ENCODE measurements at regions of chr14 and their contacts with region 1.

Region 1: GRCh38 chr14:88005978-88006851 is 1.3 kb downstream of the GPR65 start:
- DNase-seq: peak; percentile 87
- ATAC-seq: peak; percentile 93
- H3K4me3 Mint-ChIP-seq: peak overlapping the region; percentile 95
- H3K27ac Mint-ChIP-seq: peak overlapping the region; percentile 97
- H3K4me1 Mint-ChIP-seq: peaks cover 64% of the 10 kb centered on the region
- H3K27me3 Mint-ChIP-seq: no peaks in the 10 kb centered on the region

Region 2: GRCh38 chr14:87992718-87993628 is 13.2 kb before region 1 on chr14 and contains the start of gene GALC:
- CTCF ChIA-PET with region 1: interaction called, 47 read pairs
- DNase-seq: peak; percentile 98
- ATAC-seq: peak; percentile 90
- H3K4me3 Mint-ChIP-seq: peak within 1 kb of the TSS; percentile 93
- H3K27ac Mint-ChIP-seq: peak within 1 kb of the TSS; percentile 96
- H3K4me1 Mint-ChIP-seq: peaks cover 53% of the 10 kb centered on the region
- H3K27me3 Mint-ChIP-seq: no peaks in the 10 kb centered on the region
- total RNA-seq, gene GALC: 20.6 to 25.7 TPM

Region 3: GRCh38 chr14:88037270-88037669 is 31.1 kb after region 1 on chr14:
- CTCF ChIA-PET with region 1: no interaction called
- DNase-seq: no peak
- ATAC-seq: no peak
- H3K4me3 Mint-ChIP-seq: no peak overlapping the region
- H3K27ac Mint-ChIP-seq: no peak overlapping the region
- H3K4me1 Mint-ChIP-seq: peaks cover 16% of the 10 kb centered on the region
- H3K27me3 Mint-ChIP-seq: no peaks in the 10 kb centered on the region

Region 4: DNA sequence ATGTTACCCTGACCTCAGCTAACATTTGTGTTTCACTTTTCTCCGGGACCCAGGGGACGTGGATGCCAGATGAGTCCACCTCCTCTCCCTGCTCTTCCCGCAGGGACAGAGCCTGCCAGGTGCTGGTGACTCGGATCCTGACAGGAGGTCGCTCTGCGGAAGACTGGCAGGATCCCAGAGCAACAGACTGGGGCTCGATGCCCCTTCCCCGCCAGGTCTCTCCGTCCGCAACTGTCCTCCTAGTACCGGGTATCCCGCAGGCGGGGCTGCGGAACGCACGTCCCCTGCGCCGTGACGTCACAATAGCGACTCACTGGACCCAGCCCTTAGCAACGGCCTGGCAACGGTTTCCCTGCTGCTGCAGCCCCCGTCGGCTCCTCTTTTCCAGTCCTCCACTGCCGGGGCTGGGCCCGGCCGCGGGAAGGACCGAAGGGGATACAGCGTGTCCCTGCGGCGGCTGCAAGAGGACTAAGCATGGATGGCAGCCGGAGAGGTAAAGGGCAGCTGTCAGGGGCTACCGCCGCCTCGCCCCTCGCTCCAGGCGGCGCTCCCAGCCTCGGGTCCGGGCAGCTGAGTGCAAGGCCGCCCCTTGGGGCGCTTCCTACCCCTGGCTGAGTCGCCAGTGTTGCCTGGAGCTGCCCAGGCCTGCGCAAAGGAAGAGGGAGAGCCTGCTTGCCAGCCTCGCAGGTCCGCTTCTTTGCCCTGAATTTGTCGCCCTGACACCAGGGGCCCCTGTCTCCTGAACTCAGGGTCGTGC is 379.3 kb after region 1 on chr14 and contains the start of gene SPATA7:
- CTCF ChIA-PET with region 1: no interaction called
- DNase-seq: peak; percentile 94
- ATAC-seq: peak; percentile 100
- H3K4me3 Mint-ChIP-seq: peak within 1 kb of the TSS; percentile 99
- H3K27ac Mint-ChIP-seq: peak within 1 kb of the TSS; percentile 92
- H3K4me1 Mint-ChIP-seq: peaks cover 19% of the 10 kb centered on the region
- H3K27me3 Mint-ChIP-seq: peaks cover 4% of the 10 kb centered on the region
- total RNA-seq, gene SPATA7: 3.0 to 4.5 TPM

Measured in activated CD8-positive, alpha-beta memory T cell treated with anti-CD3 and anti-CD28 coated beads, Interleukin-2, amount 10 ng/mL, durations not matched to agents 7 days and 5 days (primary cell).